Endothelial cell of umbilical vein (primary cell): ENCODE measurements at regions of chr12 and their contacts with region 1.

Region 1: GRCh38 chr12:90909069-90909770 is 45.8 kb downstream of the CCER1 start:
- DNase-seq: peak; percentile 67
- H3K4me3 ChIP-seq: no peak overlapping the region
- H3K27ac ChIP-seq: no peak overlapping the region
- H3K4me1 ChIP-seq: no peaks in the 10 kb centered on the region
- H3K27me3 ChIP-seq: no peaks in the 10 kb centered on the region
- CTCF ChIP-seq: peak; percentile 69 to 71
- POLR2A ChIP-seq: no peak

Region 2: DNA sequence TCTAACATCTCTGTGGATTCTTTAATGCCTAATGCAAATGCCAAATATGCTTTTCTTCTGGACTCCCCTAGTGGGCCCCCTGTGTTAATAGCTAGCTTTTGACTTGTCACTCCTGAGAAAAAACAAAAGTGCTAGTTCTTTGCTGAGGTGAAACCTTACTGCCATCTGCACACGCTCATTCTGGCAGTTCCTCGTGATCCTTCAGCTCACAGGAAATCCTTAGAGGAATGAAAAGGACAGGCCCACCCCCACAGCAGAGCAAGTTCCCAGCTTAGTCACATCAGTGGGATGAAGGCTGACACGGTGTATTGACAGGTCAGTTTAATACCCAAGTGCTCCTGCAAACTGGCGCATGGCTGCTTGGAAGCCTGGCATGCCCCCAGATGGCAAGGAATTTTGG is 1035.5 kb before region 1 on chr12:
- CTCF ChIA-PET with region 1: no interaction called
- POLR2A ChIA-PET with region 1: no interaction called
- dilution Hi-C with region 1: no loop called
- intact Hi-C with region 1: loop called (anchors 10 kb)
- DNase-seq: peak; percentile 63
- H3K4me3 ChIP-seq: no peak overlapping the region
- H3K27ac ChIP-seq: no peak overlapping the region
- H3K4me1 ChIP-seq: no peaks in the 10 kb centered on the region
- H3K27me3 ChIP-seq: no peaks in the 10 kb centered on the region
- CTCF ChIP-seq: no peak
- POLR2A ChIP-seq: no peak

Region 3: GRCh38 chr12:90695415-90695814 is 213.8 kb before region 1 on chr12:
- CTCF ChIA-PET with region 1: interaction called, 11 read pairs
- POLR2A ChIA-PET with region 1: no interaction called
- dilution Hi-C with region 1: no loop called
- intact Hi-C with region 1: loop called (anchors 10 kb)
- DNase-seq: peak; percentile 27
- H3K4me3 ChIP-seq: no peak overlapping the region
- H3K27ac ChIP-seq: no peak overlapping the region
- H3K4me1 ChIP-seq: peaks cover 13% of the 10 kb centered on the region
- H3K27me3 ChIP-seq: no peaks in the 10 kb centered on the region
- CTCF ChIP-seq: peak in 1 of 2 donors; percentile 3
- POLR2A ChIP-seq: no peak

Region 4: GRCh38 chr12:90965204-90965603 is 56.0 kb after region 1 on chr12:
- CTCF ChIA-PET with region 1: no interaction called
- POLR2A ChIA-PET with region 1: no interaction called
- dilution Hi-C with region 1: no loop called
- intact Hi-C with region 1: no loop called
- DNase-seq: no peak
- H3K4me3 ChIP-seq: no peak overlapping the region
- H3K27ac ChIP-seq: no peak overlapping the region
- H3K4me1 ChIP-seq: peaks cover 6% of the 10 kb centered on the region
- H3K27me3 ChIP-seq: no peaks in the 10 kb centered on the region
- CTCF ChIP-seq: no peak
- POLR2A ChIP-seq: no peak

Region 5: DNA sequence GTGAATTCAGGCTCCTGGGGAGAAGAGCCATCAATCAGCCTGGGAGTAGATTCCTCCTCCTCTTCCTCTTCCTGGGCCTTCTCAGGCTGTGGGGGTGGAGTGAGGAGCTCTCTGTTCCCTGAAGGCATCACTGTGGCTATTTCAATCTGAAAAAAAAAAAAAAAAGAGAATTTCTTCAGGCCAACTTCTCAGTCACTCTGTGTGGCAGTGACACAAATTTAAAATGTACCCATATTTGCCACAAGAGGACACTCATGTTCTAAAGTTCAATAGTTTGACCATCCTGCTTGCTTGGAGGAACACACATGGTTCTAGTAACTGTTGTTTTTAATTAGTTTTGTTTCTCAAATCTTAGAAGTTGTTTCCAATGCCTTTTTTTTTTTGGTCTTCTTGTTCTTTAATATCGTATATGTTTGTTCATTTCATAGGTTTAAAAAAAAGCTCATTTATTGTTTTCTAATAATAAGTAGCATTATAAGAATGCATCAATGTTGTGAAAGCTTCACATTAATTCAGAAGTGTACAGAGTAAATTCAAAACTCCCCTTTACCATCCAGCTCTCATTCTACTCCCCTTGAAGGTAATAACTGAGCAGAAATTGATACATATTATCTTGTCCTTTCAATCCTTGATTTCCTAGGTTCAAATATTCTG is 69.0 kb after region 1 on chr12:
- CTCF ChIA-PET with region 1: no interaction called
- POLR2A ChIA-PET with region 1: no interaction called
- dilution Hi-C with region 1: no loop called
- intact Hi-C with region 1: no loop called
- DNase-seq: peak; percentile 70
- H3K4me3 ChIP-seq: no peak overlapping the region
- H3K27ac ChIP-seq: no peak overlapping the region
- H3K4me1 ChIP-seq: no peaks in the 10 kb centered on the region
- H3K27me3 ChIP-seq: no peaks in the 10 kb centered on the region
- CTCF ChIP-seq: peak; percentile 37 to 49
- POLR2A ChIP-seq: no peak